ENCODE measurements at regions of chr3 and their contacts with region 1.

Region 1: GRCh38 chr3:132029182-132029902 is 5.5 kb downstream of the CPNE4 start:
- DNase-seq: peak; percentile 54
- ATAC-seq: peak; percentile 98
- H3K4me3 ChIP-seq: no peak overlapping the region
- H3K27ac ChIP-seq: no peak overlapping the region
- H3K4me1 ChIP-seq: 0 out of 2 replicates have a peak, but pooled peaks cover under 1% of the 10 kb centered on the region
- H3K27me3 ChIP-seq: peaks cover 23% of the 10 kb centered on the region
- CTCF ChIP-seq: peak; percentile 98

Region 2: GRCh38 chr3:131053043-131053859 is 976.1 kb before region 1 on chr3:
- CTCF ChIA-PET with region 1: no interaction called
- POLR2A ChIA-PET with region 1: no interaction called
- in situ Hi-C with region 1: no loop called
- intact Hi-C with region 1: loop called (anchors 5 kb)
- DNase-seq: no peak
- ATAC-seq: no peak
- H3K4me3 ChIP-seq: no peak overlapping the region
- H3K27ac ChIP-seq: no peak overlapping the region
- H3K4me1 ChIP-seq: no peaks in the 10 kb centered on the region
- H3K27me3 ChIP-seq: no peaks in the 10 kb centered on the region
- CTCF ChIP-seq: peak; percentile 65; the same call in 1 of the 2 replicates

Region 3: DNA sequence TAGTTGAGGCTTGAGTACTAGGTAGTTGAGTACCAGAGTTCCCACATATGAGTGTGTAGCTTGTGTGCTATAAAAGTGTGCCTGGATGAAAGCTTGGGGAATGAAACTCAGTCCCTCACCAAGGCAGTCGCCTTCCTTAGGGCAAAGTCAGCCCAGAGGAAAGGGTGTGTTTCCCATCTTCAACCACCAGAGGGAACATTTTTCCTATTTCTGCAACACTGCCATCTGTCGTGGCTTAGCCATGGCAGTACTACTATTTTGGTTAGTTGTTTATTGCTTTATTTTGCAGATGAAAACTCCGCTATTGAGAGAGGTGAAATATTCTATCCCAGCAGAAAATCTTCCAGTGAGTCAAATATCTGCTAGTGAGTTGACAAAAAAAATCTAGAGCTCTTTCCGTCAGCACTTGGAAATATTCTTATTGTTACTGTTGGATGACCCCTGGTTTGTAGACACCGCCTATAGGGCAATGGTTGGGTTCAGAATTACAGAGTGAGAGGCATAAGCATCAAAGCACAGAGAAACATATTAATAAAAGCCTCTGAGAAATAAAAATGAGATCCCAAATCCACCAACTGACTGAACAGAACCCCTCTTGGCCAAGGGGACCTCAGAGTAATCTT is 234.5 kb before region 1 on chr3:
- CTCF ChIA-PET with region 1: no interaction called
- POLR2A ChIA-PET with region 1: no interaction called
- in situ Hi-C with region 1: no loop called
- intact Hi-C with region 1: loop called (anchors 1 kb)
- DNase-seq: peak; percentile 39
- ATAC-seq: peak; percentile 97
- H3K4me3 ChIP-seq: no peak overlapping the region
- H3K27ac ChIP-seq: no peak overlapping the region
- H3K4me1 ChIP-seq: no peaks in the 10 kb centered on the region
- H3K27me3 ChIP-seq: 0 out of 2 replicates have a peak, but pooled peaks cover 3% of the 10 kb centered on the region
- CTCF ChIP-seq: peak; percentile 86

Measured in Panc1 (cell line).